CD14-positive monocyte (primary cell): ENCODE measurements at regions of chr18 and their contacts with region 1.

Region 1: GRCh38 chr18:79679111-79679872 is at the start of gene CTDP1:
- DNase-seq: peak; percentile 99
- H3K4me3 ChIP-seq: peak within 1 kb of the TSS; percentile 85 to 91 (median 86)
- H3K4me3 Mint-ChIP-seq: peak within 1 kb of the TSS; percentile 85 to 91
- H3K27ac ChIP-seq: peak within 1 kb of the TSS; percentile 91 to 97
- H3K27ac Mint-ChIP-seq: peak within 1 kb of the TSS; percentile 96 to 99 (median 98)
- H3K4me1 ChIP-seq: peaks cover 35 to 50% of the 10 kb centered on the region in 2 donors
- H3K4me1 Mint-ChIP-seq: peaks cover 58% of the 10 kb centered on the region
- H3K27me3 ChIP-seq: no peaks in the 10 kb centered on the region
- H3K27me3 Mint-ChIP-seq: peaks cover 0 to 4% (median 0%) of the 10 kb centered on the region in 3 donors
- CTCF ChIP-seq: no peak
- polyA plus RNA-seq, gene CTDP1: 9.1 to 13.9 (median 9.1) TPM

Region 2: GRCh38 chr18:79393635-79394533 is 285.4 kb before region 1 on chr18:
- intact Hi-C with region 1: loop called in 1 of 2 experiments (anchors 10 kb)
- DNase-seq: peak; percentile 49 to 70 (median 62)
- H3K4me3 ChIP-seq: peak overlapping the region; percentile 28 to 69 (median 36)
- H3K4me3 Mint-ChIP-seq: peak overlapping the region; percentile 85 to 93
- H3K27ac ChIP-seq: no peak overlapping the region
- H3K27ac Mint-ChIP-seq: peak overlapping the region in 6 of 7 donors; percentile 21 to 86 (median 80)
- H3K4me1 ChIP-seq: peaks cover 22 to 41% of the 10 kb centered on the region in 2 donors
- H3K4me1 Mint-ChIP-seq: peaks cover 18% of the 10 kb centered on the region
- H3K27me3 ChIP-seq: peaks cover 54 to 79% of the 10 kb centered on the region in 2 donors
- H3K27me3 Mint-ChIP-seq: peaks cover 75 to 93% (median 83%) of the 10 kb centered on the region in 3 donors
- CTCF ChIP-seq: no peak

Region 3: DNA sequence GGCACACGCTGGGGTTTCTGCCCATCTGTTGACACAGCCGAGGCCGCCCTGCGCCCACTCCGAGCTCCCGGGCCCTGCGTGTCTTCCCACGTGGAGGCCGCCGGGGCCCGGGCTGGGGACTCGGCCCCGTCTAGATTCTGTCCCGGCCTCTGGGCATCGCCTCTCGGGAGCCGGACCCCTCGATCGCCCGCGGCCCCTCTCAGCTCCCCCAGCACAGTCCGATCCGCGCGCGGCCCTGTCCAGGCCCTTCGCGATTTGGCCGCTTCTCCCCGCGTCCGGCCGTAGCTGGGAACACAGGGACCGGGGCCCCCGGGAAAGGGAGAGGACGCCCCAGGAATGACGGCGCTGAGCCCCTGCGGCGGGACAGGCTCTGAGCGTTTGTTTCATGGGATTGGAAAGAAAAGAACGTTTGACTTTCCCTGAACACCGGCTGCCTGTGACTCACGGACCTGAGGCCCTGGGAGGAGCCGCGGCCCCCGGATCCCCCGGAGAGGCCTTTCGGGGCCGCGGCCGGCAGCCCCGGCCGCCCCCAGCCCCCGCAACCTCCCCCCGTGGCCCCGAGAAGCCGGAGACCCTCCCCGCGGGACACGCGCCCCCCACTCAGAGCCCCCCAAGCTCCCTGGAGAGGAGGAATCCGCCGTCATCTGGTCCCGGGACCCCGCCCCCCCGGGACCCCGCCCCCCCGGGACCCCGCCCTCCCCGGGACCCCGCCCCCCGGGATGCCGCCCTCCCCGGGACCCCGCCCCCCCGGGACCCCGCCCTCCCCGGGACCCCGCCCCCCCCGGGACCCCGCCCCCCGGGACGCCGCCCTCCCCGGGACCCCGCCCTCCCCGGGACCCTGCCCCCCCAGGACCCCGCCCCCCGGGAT is 62.4 kb before region 1 on chr18:
- intact Hi-C with region 1: no loop called
- DNase-seq: no peak
- H3K4me3 ChIP-seq: no peak overlapping the region
- H3K4me3 Mint-ChIP-seq: peak overlapping the region in 1 of 2 donors; percentile 21
- H3K27ac ChIP-seq: no peak overlapping the region
- H3K27ac Mint-ChIP-seq: no peak overlapping the region
- H3K4me1 ChIP-seq: peaks cover 0 to 2% of the 10 kb centered on the region in 2 donors
- H3K4me1 Mint-ChIP-seq: no peaks in the 10 kb centered on the region
- H3K27me3 ChIP-seq: peaks cover 0 to 21% of the 10 kb centered on the region in 2 donors
- H3K27me3 Mint-ChIP-seq: peaks cover 9 to 23% (median 22%) of the 10 kb centered on the region in 3 donors
- CTCF ChIP-seq: no peak

Region 4: GRCh38 chr18:79765491-79766245 is 86.4 kb after region 1 on chr18:
- intact Hi-C with region 1: no loop called
- DNase-seq: no peak
- H3K4me3 ChIP-seq: no peak overlapping the region
- H3K4me3 Mint-ChIP-seq: no peak overlapping the region
- H3K27ac ChIP-seq: no peak overlapping the region
- H3K27ac Mint-ChIP-seq: no peak overlapping the region
- H3K4me1 ChIP-seq: no peaks in the 10 kb centered on the region
- H3K4me1 Mint-ChIP-seq: no peaks in the 10 kb centered on the region
- H3K27me3 ChIP-seq: no peaks in the 10 kb centered on the region
- H3K27me3 Mint-ChIP-seq: peaks cover 4 to 8% (median 6%) of the 10 kb centered on the region in 3 donors
- CTCF ChIP-seq: no peak

Region 5: GRCh38 chr18:79790996-79791972 is 112.0 kb after region 1 on chr18:
- intact Hi-C with region 1: loop called in 1 of 2 experiments (anchors 10 kb)
- DNase-seq: peak; percentile 79 to 86 (median 85)
- H3K4me3 ChIP-seq: peak overlapping the region; percentile 7 to 68 (median 9)
- H3K4me3 Mint-ChIP-seq: peak overlapping the region; percentile 75 to 94
- H3K27ac ChIP-seq: peak overlapping the region; percentile 38 to 76
- H3K27ac Mint-ChIP-seq: peak overlapping the region; percentile 67 to 94 (median 88)
- H3K4me1 ChIP-seq: peaks cover 63 to 96% of the 10 kb centered on the region in 2 donors
- H3K4me1 Mint-ChIP-seq: peaks cover 85% of the 10 kb centered on the region
- H3K27me3 ChIP-seq: peaks cover 10 to 38% of the 10 kb centered on the region in 2 donors
- H3K27me3 Mint-ChIP-seq: peaks cover 32 to 51% (median 46%) of the 10 kb centered on the region in 3 donors
- CTCF ChIP-seq: no peak